HCT116 (cell line): ENCODE measurements at regions of chr5 and their contacts with region 1.

Region 1: DNA sequence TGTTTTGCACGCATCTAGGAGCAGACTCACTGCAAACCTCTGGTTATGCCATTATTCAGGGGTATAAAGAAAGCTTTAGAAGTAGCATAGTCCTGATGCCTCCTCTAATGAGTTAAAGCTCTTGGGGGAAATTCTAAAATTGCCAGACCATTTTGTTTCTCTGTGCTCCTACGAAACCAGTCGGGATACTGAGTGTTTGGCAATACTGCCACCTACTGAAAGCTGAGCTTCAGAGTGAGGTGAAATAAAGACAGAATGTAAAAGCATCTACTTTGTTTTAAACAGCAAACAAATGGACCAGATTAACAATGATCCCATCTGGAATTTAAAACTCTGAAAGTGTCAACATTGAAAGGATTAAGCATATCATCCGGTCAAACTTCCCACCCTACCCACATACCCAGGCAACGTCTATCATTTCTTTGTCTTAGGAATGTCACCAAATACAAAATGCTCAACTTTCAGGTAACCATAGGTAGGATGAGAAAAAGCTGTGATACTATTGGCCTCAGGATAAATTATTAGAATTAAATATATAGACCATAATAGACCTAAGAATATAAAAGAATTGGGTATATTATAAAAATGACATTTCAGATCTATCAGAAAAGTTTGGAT is 77.8 kb upstream of the SHISAL2B start:
- DNase-seq: peak; percentile 48
- ATAC-seq: peak; percentile 77
- H3K4me3 ChIP-seq: no peak overlapping the region
- H3K27ac ChIP-seq: no peak overlapping the region
- H3K4me1 ChIP-seq: no peaks in the 10 kb centered on the region
- H3K27me3 ChIP-seq: peaks cover 22% of the 10 kb centered on the region
- CTCF ChIP-seq: peak; percentile 54 to 91 (median 71); a peak in 5 of 6 replicates
- POLR2A ChIP-seq: no peak
- RAD21 ChIP-seq: peak; percentile 77

Region 2: DNA sequence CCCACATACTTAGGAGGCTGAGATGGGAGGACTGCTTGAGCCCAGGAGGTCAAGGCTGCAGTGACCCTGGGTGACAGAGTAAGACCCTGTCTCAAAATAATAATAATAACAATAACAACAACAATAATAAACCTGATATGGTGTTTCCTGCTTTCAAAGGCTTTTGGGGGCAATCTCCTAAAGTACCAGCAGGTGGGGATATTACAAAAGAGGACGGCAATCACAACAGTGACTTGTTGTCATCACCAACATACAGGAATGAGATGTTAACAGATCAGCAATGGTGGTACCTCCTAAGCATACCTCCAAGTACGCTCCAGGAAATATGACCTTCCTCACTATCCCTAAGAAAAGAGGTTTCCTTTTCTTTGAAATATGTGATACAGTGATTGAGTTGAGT is 537.9 kb before region 1 on chr5:
- CTCF ChIA-PET with region 1: no interaction called
- POLR2A ChIA-PET with region 1: no interaction called
- RAD21 ChIA-PET with region 1: no interaction called
- intact Hi-C with region 1: loop called (anchors 5 kb)
- DNase-seq: no peak
- ATAC-seq: peak; percentile 54
- H3K4me3 ChIP-seq: no peak overlapping the region
- H3K27ac ChIP-seq: no peak overlapping the region
- H3K4me1 ChIP-seq: no peaks in the 10 kb centered on the region
- H3K27me3 ChIP-seq: no peaks in the 10 kb centered on the region
- CTCF ChIP-seq: peak; percentile 5 to 50 (median 46); a peak in 4 of 6 replicates
- POLR2A ChIP-seq: no peak
- RAD21 ChIP-seq: 0 out of 2 replicates have a peak, but pooled peaks have one; percentile 8

Region 3: GRCh38 chr5:64147849-64148441 is 464.5 kb before region 1 on chr5:
- CTCF ChIA-PET with region 1: interaction called, 15 read pairs
- POLR2A ChIA-PET with region 1: no interaction called
- RAD21 ChIA-PET with region 1: no interaction called
- intact Hi-C with region 1: loop called (anchors 5 kb)
- DNase-seq: peak; percentile 8
- ATAC-seq: no peak
- H3K4me3 ChIP-seq: no peak overlapping the region
- H3K27ac ChIP-seq: no peak overlapping the region
- H3K4me1 ChIP-seq: no peaks in the 10 kb centered on the region
- H3K27me3 ChIP-seq: no peaks in the 10 kb centered on the region
- CTCF ChIP-seq: peak; percentile 25 to 65 (median 31); a peak in 5 of 6 replicates
- POLR2A ChIP-seq: no peak
- RAD21 ChIP-seq: peak; percentile 59

Region 4: GRCh38 chr5:64229163-64229774 is 383.2 kb before region 1 on chr5:
- CTCF ChIA-PET with region 1: interaction called, 85 read pairs
- POLR2A ChIA-PET with region 1: no interaction called
- RAD21 ChIA-PET with region 1: interaction called, 4 to 5 read pairs
- intact Hi-C with region 1: loop called (anchors 1 kb)
- DNase-seq: no peak
- ATAC-seq: peak; percentile 27; the same call in 1 of the 2 replicates
- H3K4me3 ChIP-seq: no peak overlapping the region
- H3K27ac ChIP-seq: no peak overlapping the region
- H3K4me1 ChIP-seq: no peaks in the 10 kb centered on the region
- H3K27me3 ChIP-seq: no peaks in the 10 kb centered on the region
- CTCF ChIP-seq: peak; percentile 23 to 74 (median 51); a peak in 3 of 6 replicates
- POLR2A ChIP-seq: no peak
- RAD21 ChIP-seq: peak; percentile 54

Region 5: GRCh38 chr5:64384761-64385160 is 227.7 kb before region 1 on chr5:
- CTCF ChIA-PET with region 1: interaction called, 3 read pairs
- POLR2A ChIA-PET with region 1: no interaction called
- RAD21 ChIA-PET with region 1: no interaction called
- intact Hi-C with region 1: loop called (anchors 5 kb)
- DNase-seq: peak; percentile 2
- ATAC-seq: peak; percentile 44; the same call in 1 of the 2 replicates
- H3K4me3 ChIP-seq: no peak overlapping the region
- H3K27ac ChIP-seq: no peak overlapping the region
- H3K4me1 ChIP-seq: no peaks in the 10 kb centered on the region
- H3K27me3 ChIP-seq: no peaks in the 10 kb centered on the region
- CTCF ChIP-seq: peak in 2 of 3 experiments; percentile 30 to 35; a peak in 3 of 6 replicates
- POLR2A ChIP-seq: no peak
- RAD21 ChIP-seq: no peak